Natural killer cell (primary cell): ENCODE measurements at regions of chr5 and their contacts with region 1.

Region 1: DNA sequence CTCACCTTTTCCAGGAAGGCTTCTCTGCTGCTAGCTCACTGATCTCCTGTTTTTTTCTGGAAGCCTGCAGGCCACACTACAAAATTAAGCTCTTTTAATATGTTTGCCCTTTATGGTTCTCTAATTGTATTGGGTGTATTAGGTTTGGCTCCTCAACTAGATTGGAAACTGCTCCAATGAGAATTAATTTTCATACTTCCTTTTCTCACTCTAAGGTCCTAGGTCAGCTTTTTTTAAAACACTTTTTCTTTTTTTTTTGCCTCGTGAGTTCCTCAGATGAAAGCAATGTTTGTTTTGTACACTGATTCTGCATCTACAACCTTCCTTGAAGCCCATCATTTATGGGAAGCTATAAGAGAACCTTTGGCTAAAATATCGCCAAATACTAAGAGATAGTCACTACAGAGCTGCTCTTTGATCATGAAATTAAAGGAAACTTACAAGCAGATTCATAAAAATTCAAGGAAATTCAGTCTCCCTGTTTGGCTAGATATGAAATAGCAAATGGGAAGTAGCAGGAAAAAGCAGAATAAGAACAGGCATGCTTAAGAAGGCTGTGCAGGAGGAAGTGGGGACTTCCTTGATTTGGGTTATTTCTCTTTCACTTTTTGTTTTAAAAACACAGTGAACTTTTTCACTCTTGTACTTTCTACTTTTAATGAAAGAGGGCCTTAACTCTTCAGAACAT is 55.2 kb upstream of the FYB1 start:
- DNase-seq: peak in 1 of 2 donors; percentile 72
- ATAC-seq: peak; percentile 58 to 67 (median 59)
- H3K4me3 ChIP-seq: peak overlapping the region; percentile 30
- H3K4me3 Mint-ChIP-seq: peak overlapping the region; percentile 93
- H3K27ac ChIP-seq: peak overlapping the region; percentile 88
- H3K27ac Mint-ChIP-seq: peak overlapping the region; percentile 90 to 98
- H3K4me1 ChIP-seq: peaks cover 33% of the 10 kb centered on the region
- H3K4me1 Mint-ChIP-seq: peaks cover 35 to 50% of the 10 kb centered on the region in 2 donors
- H3K27me3 ChIP-seq: no peaks in the 10 kb centered on the region
- H3K27me3 Mint-ChIP-seq: no peaks in the 10 kb centered on the region
- CTCF ChIP-seq: no peak

Region 2: DNA sequence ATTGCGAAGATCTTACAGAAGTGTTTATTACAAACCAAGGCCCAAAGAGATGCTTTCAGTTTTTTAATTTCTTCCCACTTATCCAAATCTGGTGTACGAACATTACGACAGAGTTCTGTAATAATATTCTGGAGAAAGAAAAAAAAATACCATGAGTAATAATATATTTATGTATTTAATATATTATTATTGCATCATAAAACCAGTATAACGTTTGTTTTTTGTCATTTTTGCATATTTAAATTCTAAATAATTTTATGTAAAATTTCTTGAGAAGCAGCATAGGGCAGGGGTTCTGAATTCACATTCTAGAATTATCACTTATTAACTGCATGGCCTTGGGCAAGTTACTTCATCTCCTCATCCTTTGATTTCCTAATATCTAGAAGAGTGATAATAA is 321.1 kb before region 1 on chr5:
- intact Hi-C with region 1: no loop called
- DNase-seq: no peak
- ATAC-seq: no peak
- H3K4me3 ChIP-seq: no peak overlapping the region
- H3K4me3 Mint-ChIP-seq: no peak overlapping the region
- H3K27ac ChIP-seq: no peak overlapping the region
- H3K27ac Mint-ChIP-seq: no peak overlapping the region
- H3K4me1 ChIP-seq: no peaks in the 10 kb centered on the region
- H3K4me1 Mint-ChIP-seq: no peaks in the 10 kb centered on the region
- H3K27me3 ChIP-seq: no peaks in the 10 kb centered on the region
- H3K27me3 Mint-ChIP-seq: no peaks in the 10 kb centered on the region
- CTCF ChIP-seq: no peak

Region 3: GRCh38 chr5:39167141-39167972 is 107.2 kb before region 1 on chr5:
- intact Hi-C with region 1: no loop called
- DNase-seq: peak in 1 of 2 donors; percentile 64
- ATAC-seq: peak; percentile 56 to 66 (median 56)
- H3K4me3 ChIP-seq: no peak overlapping the region
- H3K4me3 Mint-ChIP-seq: peak overlapping the region; percentile 54
- H3K27ac ChIP-seq: peak overlapping the region; percentile 4
- H3K27ac Mint-ChIP-seq: peak overlapping the region; percentile 90 to 91
- H3K4me1 ChIP-seq: peaks cover 19% of the 10 kb centered on the region
- H3K4me1 Mint-ChIP-seq: peaks cover 74 to 82% of the 10 kb centered on the region in 2 donors
- H3K27me3 ChIP-seq: no peaks in the 10 kb centered on the region
- H3K27me3 Mint-ChIP-seq: no peaks in the 10 kb centered on the region
- CTCF ChIP-seq: no peak

Region 4: GRCh38 chr5:39194466-39195136 is 79.9 kb before region 1 on chr5:
- intact Hi-C with region 1: no loop called
- DNase-seq: peak in 1 of 2 donors; percentile 48
- ATAC-seq: no peak
- H3K4me3 ChIP-seq: no peak overlapping the region
- H3K4me3 Mint-ChIP-seq: peak overlapping the region; percentile 3
- H3K27ac ChIP-seq: no peak overlapping the region
- H3K27ac Mint-ChIP-seq: peak overlapping the region; percentile 78 to 96
- H3K4me1 ChIP-seq: peaks cover 39% of the 10 kb centered on the region
- H3K4me1 Mint-ChIP-seq: peaks cover 74 to 86% of the 10 kb centered on the region in 2 donors
- H3K27me3 ChIP-seq: no peaks in the 10 kb centered on the region
- H3K27me3 Mint-ChIP-seq: no peaks in the 10 kb centered on the region
- CTCF ChIP-seq: no peak

Region 5: GRCh38 chr5:39209924-39210323 is 64.6 kb before region 1 on chr5:
- intact Hi-C with region 1: loop called (anchors 2 kb)
- DNase-seq: peak; percentile 66 to 92
- ATAC-seq: peak; percentile 69 to 86 (median 85)
- H3K4me3 ChIP-seq: no peak overlapping the region
- H3K4me3 Mint-ChIP-seq: peak overlapping the region; percentile 87
- H3K27ac ChIP-seq: peak overlapping the region; percentile 83
- H3K27ac Mint-ChIP-seq: peak overlapping the region; percentile 84 to 96
- H3K4me1 ChIP-seq: peaks cover 61% of the 10 kb centered on the region
- H3K4me1 Mint-ChIP-seq: peaks cover 86 to 94% of the 10 kb centered on the region in 2 donors
- H3K27me3 ChIP-seq: no peaks in the 10 kb centered on the region
- H3K27me3 Mint-ChIP-seq: no peaks in the 10 kb centered on the region
- CTCF ChIP-seq: no peak

Region 6: DNA sequence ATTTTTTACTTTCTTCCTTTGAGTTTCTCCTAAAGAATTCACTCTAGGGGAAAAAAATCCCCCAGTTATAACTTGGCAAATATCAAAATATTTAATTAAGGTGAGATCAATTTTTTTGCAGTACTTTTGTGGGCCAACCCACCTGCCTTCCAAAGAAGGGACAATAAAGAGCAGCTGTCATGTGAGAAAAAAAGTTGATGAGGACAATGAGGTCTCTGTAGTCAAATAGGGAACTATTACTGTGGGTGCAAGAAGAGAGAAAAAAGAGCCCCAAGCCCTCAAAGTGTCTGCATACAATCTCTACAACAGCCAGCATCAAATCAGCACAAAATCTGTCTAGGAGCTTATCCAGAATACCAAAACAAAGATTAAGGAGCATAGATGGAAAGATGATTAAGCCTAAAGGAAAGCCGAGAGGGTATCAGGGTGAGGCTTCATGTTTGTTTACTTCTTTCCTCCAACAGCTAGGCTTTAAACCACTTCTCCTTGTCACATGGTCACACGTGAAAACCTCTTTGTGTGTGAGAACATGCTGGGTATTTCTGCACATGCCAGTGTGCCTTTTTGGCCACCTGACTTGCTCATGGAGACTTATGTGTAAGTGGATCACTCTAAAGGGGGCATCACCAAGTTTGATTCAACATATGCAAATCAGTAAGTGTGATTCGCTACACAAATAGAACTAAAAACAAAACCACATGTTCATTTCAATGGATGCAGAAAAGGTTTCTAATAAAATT is 36.0 kb before region 1 on chr5:
- intact Hi-C with region 1: loop called (anchors 5 kb)
- DNase-seq: peak in 1 of 2 donors; percentile 15
- ATAC-seq: peak; percentile 54 to 80 (median 66)
- H3K4me3 ChIP-seq: no peak overlapping the region
- H3K4me3 Mint-ChIP-seq: peak overlapping the region; percentile 70
- H3K27ac ChIP-seq: peak overlapping the region; percentile 44
- H3K27ac Mint-ChIP-seq: peak overlapping the region; percentile 87 to 89
- H3K4me1 ChIP-seq: no peaks in the 10 kb centered on the region
- H3K4me1 Mint-ChIP-seq: peaks cover 50 to 51% of the 10 kb centered on the region in 2 donors
- H3K27me3 ChIP-seq: no peaks in the 10 kb centered on the region
- H3K27me3 Mint-ChIP-seq: no peaks in the 10 kb centered on the region
- CTCF ChIP-seq: no peak

Region 7: DNA sequence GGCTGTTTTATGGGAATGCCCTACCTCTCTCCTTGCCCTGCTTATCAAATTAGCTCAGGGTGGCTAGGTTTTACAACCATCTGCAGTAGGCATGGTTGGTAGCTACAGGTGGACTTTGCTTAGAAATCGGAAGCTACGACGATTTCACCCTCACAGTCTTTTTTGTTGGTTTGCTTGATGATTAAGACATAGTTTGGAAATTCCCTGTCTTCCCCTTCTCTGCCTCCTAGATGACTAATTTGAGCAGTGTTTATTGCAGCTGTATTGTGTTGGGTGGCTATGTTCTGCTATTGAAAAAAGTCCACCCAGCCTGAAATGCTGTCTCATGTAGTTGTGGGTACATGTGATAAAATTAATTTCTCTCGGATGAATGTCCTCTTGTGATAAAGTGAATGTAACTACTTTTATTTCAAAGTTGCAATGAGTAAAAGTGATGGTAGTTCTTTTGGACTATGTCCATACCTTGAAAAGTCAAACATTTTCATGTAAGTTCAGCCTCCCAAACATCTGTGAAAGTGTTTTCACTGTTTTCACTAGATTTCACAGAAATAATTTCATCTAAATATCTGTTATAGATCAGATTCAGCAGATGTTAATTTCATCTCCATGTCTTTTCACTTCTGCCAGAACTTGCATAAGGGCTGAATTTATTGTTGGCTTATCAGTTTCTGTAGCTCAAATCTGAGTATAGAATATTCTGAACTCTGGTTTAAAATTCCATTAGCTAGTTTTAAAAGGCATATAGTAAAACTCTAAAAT is 17.9 kb before region 1 on chr5:
- intact Hi-C with region 1: loop called (anchors 2 kb)
- DNase-seq: peak in 1 of 2 donors; percentile 73
- ATAC-seq: peak; percentile 70 to 94 (median 94)
- H3K4me3 ChIP-seq: no peak overlapping the region
- H3K4me3 Mint-ChIP-seq: peak overlapping the region; percentile 35
- H3K27ac ChIP-seq: no peak overlapping the region
- H3K27ac Mint-ChIP-seq: peak overlapping the region; percentile 69 to 81
- H3K4me1 ChIP-seq: peaks cover 19% of the 10 kb centered on the region
- H3K4me1 Mint-ChIP-seq: peaks cover 76 to 79% of the 10 kb centered on the region in 2 donors
- H3K27me3 ChIP-seq: no peaks in the 10 kb centered on the region
- H3K27me3 Mint-ChIP-seq: no peaks in the 10 kb centered on the region
- CTCF ChIP-seq: no peak

Region 8: DNA sequence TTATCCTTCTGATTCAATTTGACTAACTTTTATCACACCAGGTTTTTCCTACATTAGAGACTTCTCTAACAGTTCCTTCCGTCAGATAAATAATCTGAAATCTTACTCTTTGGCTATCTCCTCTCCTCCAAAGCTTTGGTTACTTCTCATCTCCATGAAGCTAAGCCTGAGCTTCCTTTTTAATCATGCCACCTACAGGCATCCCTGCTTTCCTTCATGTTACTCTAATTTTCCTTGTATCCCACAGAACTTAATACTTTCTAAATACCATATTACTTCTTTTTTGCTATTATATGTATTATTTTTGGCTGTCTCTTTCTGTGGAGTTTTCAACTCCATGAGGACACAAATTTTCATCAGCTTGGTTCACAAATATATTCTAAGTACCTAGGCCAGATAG is 40.0 kb after region 1 on chr5:
- intact Hi-C with region 1: no loop called
- DNase-seq: no peak
- ATAC-seq: no peak
- H3K4me3 ChIP-seq: no peak overlapping the region
- H3K4me3 Mint-ChIP-seq: no peak overlapping the region
- H3K27ac ChIP-seq: no peak overlapping the region
- H3K27ac Mint-ChIP-seq: no peak overlapping the region
- H3K4me1 ChIP-seq: no peaks in the 10 kb centered on the region
- H3K4me1 Mint-ChIP-seq: no peaks in the 10 kb centered on the region
- H3K27me3 ChIP-seq: peaks cover under 1% of the 10 kb centered on the region
- H3K27me3 Mint-ChIP-seq: peaks cover 7 to 22% of the 10 kb centered on the region in 2 donors
- CTCF ChIP-seq: no peak